OCI-LY7 (cell line): ENCODE measurements at regions of chr11 and their contacts with region 1.

Region 1: GRCh38 chr11:34068111-34068510 is 16.6 kb downstream of the CAPRIN1 start:
- DNase-seq: no peak
- H3K4me3 ChIP-seq: no peak overlapping the region
- H3K27ac ChIP-seq: peak overlapping the region; percentile 29
- H3K4me1 ChIP-seq: peaks cover 47% of the 10 kb centered on the region
- CTCF ChIP-seq: no peak

Region 2: DNA sequence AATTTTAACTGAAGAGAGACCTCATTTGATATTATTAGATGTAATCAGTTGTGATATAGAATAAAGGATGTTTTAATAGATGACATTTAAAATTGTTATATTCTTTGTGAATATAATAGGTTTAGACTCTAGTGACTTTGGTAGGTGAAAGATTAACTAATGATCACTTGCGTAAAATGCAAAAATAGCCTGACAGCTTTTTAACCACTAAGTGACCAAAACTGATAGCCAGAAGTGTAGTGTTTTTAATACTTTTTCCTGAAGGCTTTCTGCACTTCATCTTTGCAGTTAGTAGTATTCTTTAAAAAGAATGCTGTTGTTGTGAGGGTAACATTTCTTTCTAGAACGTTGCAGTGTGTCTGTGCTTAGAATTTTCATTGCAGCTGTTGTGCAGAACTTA is 11.4 kb before region 1 on chr11:
- CTCF ChIA-PET with region 1: interaction called, 16 read pairs
- POLR2A ChIA-PET with region 1: interaction called, 20 read pairs
- intact Hi-C with region 1: loop called (anchors 2 kb)
- DNase-seq: no peak
- H3K4me3 ChIP-seq: peak overlapping the region; percentile 90
- H3K27ac ChIP-seq: no peak overlapping the region
- H3K4me1 ChIP-seq: peaks cover 39% of the 10 kb centered on the region
- CTCF ChIP-seq: no peak